Panc1 (cell line): ENCODE measurements at regions of chr11 and their contacts with region 1.

Region 1: DNA sequence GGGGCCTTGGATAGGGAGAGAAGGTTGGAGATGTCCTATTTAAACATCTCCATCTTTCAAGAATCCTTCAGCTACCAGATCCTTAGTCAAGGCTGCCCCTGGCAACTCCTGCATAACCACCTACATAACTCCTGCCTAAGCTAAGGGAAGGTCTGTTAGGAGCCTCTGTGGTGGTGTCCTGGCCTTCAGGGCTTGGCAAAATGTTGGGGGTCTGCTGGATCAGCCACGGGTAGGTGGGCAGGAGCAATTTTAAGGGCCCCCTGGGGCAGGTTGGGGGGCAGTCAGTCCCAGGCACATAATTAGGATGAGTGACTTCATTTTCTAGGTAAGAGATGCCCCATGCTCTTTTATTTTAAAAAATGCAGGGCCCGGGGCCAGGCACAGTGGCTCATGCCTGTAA is 25.9 kb downstream of the USH1C start:
- DNase-seq: no peak
- ATAC-seq: no peak
- H3K4me3 ChIP-seq: no peak overlapping the region
- H3K27ac ChIP-seq: no peak overlapping the region
- H3K4me1 ChIP-seq: no peaks in the 10 kb centered on the region
- H3K27me3 ChIP-seq: no peaks in the 10 kb centered on the region
- CTCF ChIP-seq: no peak

Region 2: DNA sequence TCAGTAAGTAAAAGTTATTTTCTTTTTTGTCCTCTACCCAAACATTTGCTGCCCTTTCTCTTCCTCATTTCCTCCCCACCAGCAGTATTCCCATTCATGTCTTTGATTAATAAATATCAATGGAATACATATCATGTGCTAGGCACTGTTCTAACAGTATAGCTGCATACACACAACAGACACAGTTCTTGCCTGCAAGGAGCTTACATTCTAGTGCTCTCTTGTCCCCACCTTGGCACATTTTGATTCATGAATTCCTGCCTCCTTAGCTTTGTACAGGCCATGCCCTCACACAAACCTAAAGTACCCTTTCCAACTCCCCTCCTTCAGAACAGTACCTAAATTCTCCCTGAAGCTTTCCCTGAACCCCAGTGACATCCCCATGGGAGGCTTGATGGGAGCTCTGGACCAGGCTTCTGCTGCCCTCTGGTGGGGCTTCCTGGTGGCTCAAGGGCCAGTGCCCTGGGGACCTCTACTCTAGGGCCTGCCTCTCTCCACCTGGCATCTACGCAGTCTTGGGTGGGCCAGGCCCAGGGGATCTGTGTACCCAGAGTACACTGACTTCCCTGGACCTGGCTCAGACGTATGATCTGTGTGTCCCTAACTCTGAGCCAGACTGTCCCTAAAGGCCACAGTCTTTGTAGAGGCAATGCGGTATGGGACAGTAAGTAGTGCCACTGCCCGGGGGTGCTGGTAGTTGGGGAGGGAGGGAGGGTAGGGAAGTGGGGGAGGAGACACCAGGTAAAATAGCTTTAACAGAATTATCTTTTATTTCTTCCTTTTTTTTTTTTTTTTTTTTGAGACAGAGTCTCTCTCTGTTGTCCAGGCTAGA is 455.0 kb before region 1 on chr11:
- CTCF ChIA-PET with region 1: no interaction called
- POLR2A ChIA-PET with region 1: no interaction called
- in situ Hi-C with region 1: no loop called
- intact Hi-C with region 1: no loop called
- DNase-seq: peak; percentile 28
- ATAC-seq: peak; percentile 96
- H3K4me3 ChIP-seq: no peak overlapping the region
- H3K27ac ChIP-seq: no peak overlapping the region
- H3K4me1 ChIP-seq: no peaks in the 10 kb centered on the region
- H3K27me3 ChIP-seq: no peaks in the 10 kb centered on the region
- CTCF ChIP-seq: peak; percentile 90

Region 3: GRCh38 chr11:17489751-17490150 is 28.6 kb before region 1 on chr11:
- CTCF ChIA-PET with region 1: no interaction called
- POLR2A ChIA-PET with region 1: no interaction called
- in situ Hi-C with region 1: no loop called
- intact Hi-C with region 1: no loop called
- DNase-seq: no peak
- ATAC-seq: no peak
- H3K4me3 ChIP-seq: no peak overlapping the region
- H3K27ac ChIP-seq: no peak overlapping the region
- H3K4me1 ChIP-seq: no peaks in the 10 kb centered on the region
- H3K27me3 ChIP-seq: peaks cover 4% of the 10 kb centered on the region; the same call in 1 of the 2 replicates
- CTCF ChIP-seq: no peak

Region 4: DNA sequence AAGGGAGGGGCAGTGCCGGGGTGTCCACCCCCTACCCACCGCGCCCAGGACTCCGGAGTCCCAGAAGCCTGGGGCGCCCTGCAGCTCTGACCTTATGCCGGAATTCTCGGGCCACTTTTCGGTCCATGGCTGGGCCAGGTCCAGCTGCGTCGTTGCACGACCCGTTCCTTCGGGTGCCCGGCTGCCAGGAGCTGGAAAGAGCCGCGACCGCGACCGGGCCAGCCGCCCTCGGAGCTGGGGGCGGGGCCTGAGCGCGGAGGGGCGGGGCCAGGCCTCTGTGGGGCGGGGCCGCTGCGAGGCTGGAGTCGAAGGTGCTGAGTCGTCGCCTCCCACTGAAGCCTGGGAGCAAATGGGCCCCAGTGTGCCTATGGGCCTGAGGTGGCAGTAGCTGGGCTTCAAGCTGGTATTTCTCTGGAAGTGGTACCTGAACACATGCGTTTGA is 25.8 kb after region 1 on chr11 and contains the start of gene USH1C:
- CTCF ChIA-PET with region 1: no interaction called
- POLR2A ChIA-PET with region 1: interaction called, 12 read pairs
- in situ Hi-C with region 1: no loop called
- intact Hi-C with region 1: no loop called
- DNase-seq: no peak
- ATAC-seq: peak; percentile 89
- H3K4me3 ChIP-seq: peak within 1 kb of the TSS; percentile 22 to 41
- H3K27ac ChIP-seq: no peak within 1 kb of the TSS
- H3K4me1 ChIP-seq: no peaks in the 10 kb centered on the region
- H3K27me3 ChIP-seq: no peaks in the 10 kb centered on the region
- CTCF ChIP-seq: no peak
- total RNA-seq, gene USH1C: not detected